Esophagus muscularis mucosa (tissue), 4 donors: ENCODE measurements at regions of chr2 and their contacts with region 1.

Region 1: GRCh38 chr2:237858294-237859081 is 935 bp upstream of the RAMP1 start:
- DNase-seq: peak; percentile 93
- H3K4me3 ChIP-seq: peak overlapping the region; percentile 64 to 77 (median 72)
- H3K27ac ChIP-seq: peak overlapping the region; percentile 89 to 95 (median 93)
- H3K4me1 ChIP-seq: peaks cover 15 to 52% (median 38%) of the 10 kb centered on the region in 4 donors
- H3K27me3 ChIP-seq: peaks cover 0 to 10% (median 0%) of the 10 kb centered on the region in 4 donors
- CTCF ChIP-seq: peak; percentile 75 to 90 (median 86)
- EP300 ChIP-seq: no peak
- POLR2A ChIP-seq: no peak

Region 2: DNA sequence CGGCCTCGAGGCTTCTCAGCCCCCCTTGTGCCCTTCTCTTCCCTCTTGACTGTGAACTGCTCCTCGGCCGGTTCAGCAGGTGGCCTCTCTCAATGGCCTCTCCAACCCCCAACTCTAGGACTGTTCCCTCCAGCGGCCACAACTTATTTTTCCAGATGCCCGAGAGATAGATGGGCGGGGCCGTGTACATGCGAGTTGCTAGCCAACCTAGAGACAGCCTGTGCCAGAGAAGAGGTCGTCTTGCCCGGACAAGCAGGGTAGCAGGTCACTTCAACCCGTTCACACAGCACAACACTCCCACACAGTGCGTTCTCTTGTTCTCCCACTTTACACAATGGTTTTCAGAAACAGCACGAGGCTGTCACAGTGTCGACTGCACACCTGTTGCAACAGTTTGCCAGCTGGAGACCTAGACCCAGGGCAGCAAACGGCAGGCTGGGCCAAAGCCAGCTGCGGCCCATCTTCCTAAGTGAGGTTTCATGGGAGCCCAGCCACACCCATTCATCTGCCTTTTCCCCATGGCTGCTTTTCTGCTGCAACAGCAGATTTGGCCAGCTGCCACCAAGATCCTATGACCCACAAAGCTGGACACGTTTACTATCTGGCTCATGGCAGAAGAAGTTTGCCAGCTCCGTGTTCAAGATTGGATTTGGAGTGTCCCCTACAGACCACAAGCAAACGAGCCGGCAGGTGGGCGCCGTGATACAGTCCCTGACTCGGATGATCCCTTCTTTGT is 299.4 kb before region 1 on chr2:
- intact Hi-C with region 1: no loop called
- DNase-seq: peak; percentile 94
- H3K4me3 ChIP-seq: no peak overlapping the region
- H3K27ac ChIP-seq: no peak overlapping the region
- H3K4me1 ChIP-seq: peaks cover 9 to 30% (median 26%) of the 10 kb centered on the region in 4 donors
- H3K27me3 ChIP-seq: peaks cover 0 to 10% (median 0%) of the 10 kb centered on the region in 4 donors
- CTCF ChIP-seq: peak in 1 of 3 experiments; percentile 16
- EP300 ChIP-seq: no peak
- POLR2A ChIP-seq: no peak

Region 3: DNA sequence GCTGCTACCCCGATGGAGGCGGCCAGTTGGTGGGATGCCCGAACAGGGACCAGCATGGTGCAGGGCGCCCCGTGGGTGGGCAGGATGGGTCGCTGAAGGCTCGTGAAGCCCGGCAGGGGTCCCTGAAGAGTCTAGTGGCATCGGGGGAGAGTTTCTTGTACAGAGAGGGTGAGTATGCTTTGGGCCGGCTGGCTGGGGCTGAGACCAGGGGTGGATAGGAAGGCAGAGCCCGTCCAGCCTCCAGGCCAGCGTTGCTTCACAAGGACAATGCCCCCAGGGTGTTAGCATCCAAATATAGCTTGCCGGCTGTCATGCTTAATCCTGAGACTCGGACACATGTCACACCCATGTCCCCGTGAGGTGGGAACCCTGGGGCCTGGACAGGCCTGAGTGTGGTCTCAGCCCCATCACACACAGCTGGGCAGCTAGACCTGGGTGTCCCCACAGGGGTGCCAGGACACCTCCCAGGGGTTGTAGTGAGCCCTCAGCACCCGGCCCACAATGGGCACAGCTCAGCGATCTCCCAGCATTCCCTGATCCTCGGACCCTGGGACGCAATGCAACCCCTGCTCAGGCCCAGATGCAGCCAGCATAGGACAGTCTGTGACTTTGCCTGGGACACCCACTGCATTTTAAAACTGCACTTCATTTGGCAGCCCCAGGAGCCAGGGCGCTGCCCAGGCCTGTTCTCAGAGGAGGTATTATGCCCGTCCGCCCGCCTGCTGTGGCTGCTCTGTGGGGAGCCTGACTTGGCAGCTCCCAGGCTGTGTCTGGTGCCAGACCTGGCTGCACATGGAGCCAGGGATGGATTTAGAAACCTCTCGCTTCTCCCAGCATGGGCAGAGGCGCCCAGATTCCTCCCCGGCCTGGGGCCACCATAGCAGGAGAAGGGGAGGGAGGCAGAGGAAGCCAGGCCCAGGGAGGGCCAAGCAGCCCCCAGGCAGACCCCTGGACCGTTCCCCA is 37.3 kb after region 1 on chr2:
- intact Hi-C with region 1: loop called (anchors 5 kb)
- DNase-seq: no peak
- H3K4me3 ChIP-seq: no peak overlapping the region
- H3K27ac ChIP-seq: peak overlapping the region; percentile 91 to 97 (median 95)
- H3K4me1 ChIP-seq: peaks cover 51 to 87% (median 78%) of the 10 kb centered on the region in 4 donors
- H3K27me3 ChIP-seq: no peaks in the 10 kb centered on the region
- CTCF ChIP-seq: no peak
- EP300 ChIP-seq: peak; percentile 65
- POLR2A ChIP-seq: peak; percentile 2

Region 4: DNA sequence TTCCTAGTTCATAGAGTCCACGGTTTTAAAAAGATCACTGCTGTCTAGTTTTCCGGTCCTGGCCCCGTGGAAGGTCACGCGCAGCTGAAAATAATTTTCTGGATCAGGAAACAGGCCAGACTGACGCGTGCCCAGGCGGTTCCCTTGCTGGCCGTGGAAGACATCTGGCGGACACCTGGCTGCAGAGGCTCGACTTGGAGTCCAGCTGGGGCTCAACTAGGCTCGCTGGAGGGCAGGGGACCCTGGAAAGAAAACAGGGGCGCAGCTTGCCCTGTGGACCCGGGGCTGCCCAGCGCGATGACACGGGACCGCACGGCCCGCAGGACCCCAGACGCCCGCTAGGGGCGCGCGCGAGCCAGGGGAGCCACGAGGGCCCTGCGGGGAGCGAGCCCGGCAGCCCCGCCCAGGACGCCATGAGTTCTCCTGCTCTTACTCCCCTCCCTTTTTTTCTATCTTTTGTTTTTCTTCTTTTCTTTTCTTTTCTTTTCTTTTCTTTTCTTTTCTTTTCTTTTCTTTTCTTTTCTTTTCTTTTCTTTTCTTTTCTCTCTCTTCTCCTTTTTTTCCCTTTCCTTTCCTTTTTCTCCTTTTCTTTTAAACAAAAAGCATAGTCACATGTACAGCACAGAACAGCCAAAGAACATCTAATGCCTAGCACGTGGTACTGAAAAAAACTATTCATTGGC is 65.1 kb after region 1 on chr2:
- intact Hi-C with region 1: loop called (anchors 2 kb)
- DNase-seq: peak; percentile 93
- H3K4me3 ChIP-seq: peak overlapping the region; percentile 43 to 55 (median 48)
- H3K27ac ChIP-seq: peak overlapping the region; percentile 73 to 79 (median 78)
- H3K4me1 ChIP-seq: peaks cover 7 to 26% (median 23%) of the 10 kb centered on the region in 4 donors
- H3K27me3 ChIP-seq: no peaks in the 10 kb centered on the region
- CTCF ChIP-seq: peak; percentile 98 to 100 (median 98)
- EP300 ChIP-seq: no peak
- POLR2A ChIP-seq: no peak

Region 5: DNA sequence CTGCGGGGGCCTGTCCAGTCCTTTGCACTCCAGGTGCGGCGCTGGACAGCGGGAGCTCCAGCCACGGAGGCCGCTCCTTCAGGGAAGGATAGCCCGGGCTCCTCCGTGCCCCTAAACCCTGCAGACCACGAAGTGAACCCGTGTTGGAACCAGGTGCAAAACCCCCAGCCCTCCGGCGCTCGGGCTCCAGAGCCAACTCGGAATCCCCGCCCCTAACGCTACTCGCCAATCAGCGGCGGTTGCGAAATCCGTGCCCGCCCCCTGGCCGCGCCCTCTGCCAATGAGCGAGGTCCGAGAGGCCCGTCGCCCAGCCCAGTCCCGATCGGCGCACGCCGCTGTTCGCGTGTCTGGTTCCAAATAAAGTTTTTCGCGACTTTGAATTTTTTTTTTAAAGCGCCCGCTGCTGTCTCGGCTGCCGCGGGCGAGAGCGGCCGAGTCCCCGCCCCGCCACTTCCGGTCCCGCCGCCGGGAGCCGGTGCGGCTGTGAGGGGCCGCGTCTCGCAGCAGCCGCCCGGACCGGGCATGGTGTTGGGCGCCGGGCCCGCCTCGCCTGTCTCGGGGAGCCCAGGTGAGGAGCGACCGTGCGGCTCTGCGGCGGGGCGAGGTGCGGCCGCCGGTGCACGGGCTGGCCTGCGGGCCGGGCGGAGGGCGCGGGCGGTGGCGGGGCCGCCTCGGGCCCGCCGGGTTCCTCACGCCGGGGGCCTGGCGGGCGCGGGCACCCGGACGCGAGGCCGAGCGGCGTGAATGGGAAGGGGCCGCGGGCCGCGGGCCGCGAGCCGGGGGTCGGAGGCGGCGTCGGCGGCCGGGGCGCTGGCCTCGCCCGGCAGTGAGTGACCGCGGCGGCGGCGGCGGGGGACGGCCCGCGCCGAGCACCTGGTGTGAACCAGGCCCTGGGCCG is 108.3 kb after region 1 on chr2 and contains the start of gene UBE2F:
- intact Hi-C with region 1: loop called (anchors 2 kb)
- DNase-seq: peak; percentile 99
- H3K4me3 ChIP-seq: peak within 1 kb of the TSS; percentile 65 to 85 (median 73)
- H3K27ac ChIP-seq: peak within 1 kb of the TSS; percentile 76 to 84 (median 81)
- H3K4me1 ChIP-seq: peaks cover 30 to 50% (median 43%) of the 10 kb centered on the region in 4 donors
- H3K27me3 ChIP-seq: no peaks in the 10 kb centered on the region
- CTCF ChIP-seq: peak in 1 of 3 experiments; percentile 34
- EP300 ChIP-seq: no peak
- POLR2A ChIP-seq: peak; percentile 86
- total RNA-seq, gene UBE2F: 59.0 to 111 (median 78.5) TPM

Region 6: DNA sequence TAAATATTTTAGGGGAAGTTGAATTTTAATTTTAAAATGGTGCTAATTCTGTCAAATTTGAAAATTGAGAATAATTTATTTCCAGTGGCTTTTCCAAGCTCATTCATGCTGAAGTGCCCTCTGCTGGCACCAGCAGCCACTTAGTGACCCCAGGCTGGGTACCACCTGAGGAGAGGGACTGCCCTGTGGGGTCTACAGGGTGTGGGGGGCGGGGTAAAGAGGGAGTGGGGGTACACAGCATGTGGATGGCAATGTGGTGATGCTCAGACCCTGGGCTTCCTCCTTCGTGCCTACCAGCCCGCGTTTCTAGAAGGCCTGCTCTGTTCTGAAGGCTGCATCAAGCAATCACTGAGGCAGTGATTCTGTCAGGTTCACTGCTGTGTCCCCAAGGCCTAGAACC is 157.2 kb after region 1 on chr2:
- intact Hi-C with region 1: loop called (anchors 10 kb)
- DNase-seq: no peak
- H3K4me3 ChIP-seq: no peak overlapping the region
- H3K27ac ChIP-seq: no peak overlapping the region
- H3K4me1 ChIP-seq: no peaks in the 10 kb centered on the region
- H3K27me3 ChIP-seq: no peaks in the 10 kb centered on the region
- CTCF ChIP-seq: peak in 1 of 3 experiments; percentile 4
- EP300 ChIP-seq: no peak
- POLR2A ChIP-seq: no peak

Region 7: GRCh38 chr2:238060542-238061314 is 202.2 kb after region 1 on chr2 and contains the start of gene SCLY:
- intact Hi-C with region 1: loop called (anchors 2 kb)
- DNase-seq: peak; percentile 99
- H3K4me3 ChIP-seq: peak within 1 kb of the TSS; percentile 64 to 93 (median 86)
- H3K27ac ChIP-seq: peak within 1 kb of the TSS; percentile 90 to 95 (median 92)
- H3K4me1 ChIP-seq: peaks cover 10 to 27% (median 20%) of the 10 kb centered on the region in 4 donors
- H3K27me3 ChIP-seq: no peaks in the 10 kb centered on the region
- CTCF ChIP-seq: peak in 1 of 3 experiments; percentile 3
- EP300 ChIP-seq: no peak
- POLR2A ChIP-seq: peak; percentile 84
- total RNA-seq, gene SCLY: 9.8 to 17.9 (median 13.9) TPM

Region 8: GRCh38 chr2:238263204-238264071 is 404.9 kb after region 1 on chr2:
- intact Hi-C with region 1: loop called (anchors 2 kb)
- DNase-seq: peak; percentile 98
- H3K4me3 ChIP-seq: no peak overlapping the region
- H3K27ac ChIP-seq: peak overlapping the region; percentile 51 to 63 (median 58)
- H3K4me1 ChIP-seq: peaks cover 23 to 33% (median 25%) of the 10 kb centered on the region in 4 donors
- H3K27me3 ChIP-seq: no peaks in the 10 kb centered on the region
- CTCF ChIP-seq: peak; percentile 77 to 90 (median 79)
- EP300 ChIP-seq: no peak
- POLR2A ChIP-seq: no peak